ENCODE measurements at regions of chr19 and their contacts with region 1.

Region 1: DNA sequence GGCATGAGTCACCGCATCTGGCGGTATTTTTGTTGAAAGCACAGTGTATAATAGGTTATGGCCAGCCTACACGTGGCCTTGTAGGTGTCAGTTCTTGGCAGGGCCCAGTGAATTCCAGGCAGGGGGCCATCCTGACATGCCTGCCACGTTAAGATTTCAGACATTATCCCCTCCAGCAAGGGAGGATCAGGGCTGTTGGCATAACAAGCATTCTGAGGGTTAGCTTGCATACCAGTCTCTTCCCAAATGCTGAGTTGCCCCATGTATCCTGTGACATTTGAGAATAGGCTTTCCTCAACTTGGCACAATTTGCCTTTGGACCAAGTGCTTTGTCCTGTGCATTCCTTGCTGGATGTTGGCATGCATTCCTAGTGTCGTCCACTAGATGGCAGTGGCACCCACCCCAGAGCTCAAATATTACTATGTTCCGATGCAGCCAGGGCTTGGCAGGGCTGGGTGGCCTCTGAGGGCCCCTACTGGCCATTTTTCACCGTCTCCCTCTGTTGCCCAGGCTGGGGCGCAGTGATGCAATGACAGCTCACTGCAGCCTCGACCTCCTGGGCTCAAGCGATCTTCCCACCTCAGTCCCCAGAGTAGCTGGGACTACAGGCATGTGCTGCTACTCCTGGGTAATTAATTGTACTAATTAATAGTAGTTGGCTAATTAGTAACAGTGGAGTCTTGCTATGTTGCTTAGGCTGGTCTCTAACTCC is 31.2 kb downstream of the NLRP12 start:
- H3K4me3 ChIP-seq: no peak overlapping the region
- H3K27ac ChIP-seq: no peak overlapping the region
- H3K4me1 ChIP-seq: no peaks in the 10 kb centered on the region
- CTCF ChIP-seq: peak; percentile 83

Region 2: DNA sequence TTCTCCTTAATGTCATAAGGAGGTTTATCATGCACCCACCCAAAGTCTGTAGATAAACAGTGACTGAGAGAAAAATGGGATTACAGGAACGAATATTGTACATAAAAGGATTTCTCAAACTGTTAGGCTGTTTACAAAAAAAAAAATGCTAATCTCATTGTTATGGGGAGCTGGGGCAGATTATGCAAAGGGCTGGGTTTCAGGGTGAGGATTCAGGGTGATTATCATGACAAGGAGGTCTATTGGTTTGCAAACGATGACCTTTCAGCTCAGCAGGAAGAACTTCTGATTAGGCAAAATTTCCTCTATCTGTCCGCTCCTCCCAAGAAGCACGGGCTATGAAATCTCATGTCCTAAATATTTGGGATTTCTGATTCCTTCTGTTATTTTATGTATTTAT is 10.2 kb before region 1 on chr19:
- CTCF ChIA-PET with region 1: interaction called, 27 read pairs
- POLR2A ChIA-PET with region 1: no interaction called
- H3K4me3 ChIP-seq: no peak overlapping the region
- H3K27ac ChIP-seq: no peak overlapping the region
- H3K4me1 ChIP-seq: no peaks in the 10 kb centered on the region
- CTCF ChIP-seq: no peak

Region 3: GRCh38 chr19:53819861-53820260 is 27.0 kb after region 1 on chr19:
- CTCF ChIA-PET with region 1: interaction called, 13 read pairs
- POLR2A ChIA-PET with region 1: no interaction called
- H3K4me3 ChIP-seq: no peak overlapping the region
- H3K27ac ChIP-seq: no peak overlapping the region
- H3K4me1 ChIP-seq: no peaks in the 10 kb centered on the region
- CTCF ChIP-seq: no peak

Region 4: GRCh38 chr19:53868892-53869804 is 76.3 kb after region 1 on chr19:
- CTCF ChIA-PET with region 1: no interaction called
- POLR2A ChIA-PET with region 1: no interaction called
- H3K4me3 ChIP-seq: peak overlapping the region; percentile 71
- H3K27ac ChIP-seq: peak overlapping the region; percentile 78
- H3K4me1 ChIP-seq: peaks cover 15% of the 10 kb centered on the region
- CTCF ChIP-seq: peak; percentile 62

Region 5: DNA sequence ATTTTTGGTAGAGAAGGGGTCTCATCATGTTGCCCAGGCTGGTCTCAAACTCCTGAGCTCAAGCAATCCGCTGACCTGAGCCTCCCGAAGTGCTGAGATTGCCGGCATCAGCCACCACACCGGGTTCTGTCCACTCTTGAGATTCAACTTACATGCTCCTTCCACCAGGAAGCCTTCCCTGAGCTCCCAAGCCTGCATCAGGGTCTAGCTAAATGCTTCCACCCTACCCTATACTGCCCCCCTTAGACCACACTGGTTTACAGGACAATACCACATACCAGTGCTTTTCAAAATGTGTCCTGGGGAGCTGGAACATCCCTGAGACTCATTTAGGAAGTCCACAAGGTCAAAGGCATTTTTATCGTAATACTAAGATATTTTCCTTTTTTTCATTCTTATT is 154.7 kb after region 1 on chr19:
- CTCF ChIA-PET with region 1: interaction called, 20 read pairs
- POLR2A ChIA-PET with region 1: no interaction called
- H3K4me3 ChIP-seq: no peak overlapping the region
- H3K27ac ChIP-seq: no peak overlapping the region
- H3K4me1 ChIP-seq: no peaks in the 10 kb centered on the region
- CTCF ChIP-seq: no peak

Region 6: GRCh38 chr19:54029930-54030490 is 237.1 kb after region 1 on chr19:
- CTCF ChIA-PET with region 1: interaction called, 51 read pairs
- POLR2A ChIA-PET with region 1: interaction called, 5 read pairs
- H3K4me3 ChIP-seq: no peak overlapping the region
- H3K27ac ChIP-seq: no peak overlapping the region
- H3K4me1 ChIP-seq: no peaks in the 10 kb centered on the region
- CTCF ChIP-seq: peak; percentile 33